Gastrocnemius medialis (tissue), 4 donors: ENCODE measurements at regions of chr5 and their contacts with region 1.

Region 1: GRCh38 chr5:139651853-139652787 is 4.0 kb downstream of the CXXC5 start:
- DNase-seq: peak; percentile 83 to 92
- ATAC-seq: peak; percentile 35 to 56
- H3K4me3 ChIP-seq: peak overlapping the region; percentile 27 to 77 (median 36)
- H3K27ac ChIP-seq: peak overlapping the region; percentile 97 to 99 (median 98)
- H3K4me1 ChIP-seq: peaks cover 69 to 70% of the 10 kb centered on the region in 2 donors
- H3K27me3 ChIP-seq: no peaks in the 10 kb centered on the region
- CTCF ChIP-seq: no peak
- POLR2A ChIP-seq: peak; percentile 53 to 87

Region 2: DNA sequence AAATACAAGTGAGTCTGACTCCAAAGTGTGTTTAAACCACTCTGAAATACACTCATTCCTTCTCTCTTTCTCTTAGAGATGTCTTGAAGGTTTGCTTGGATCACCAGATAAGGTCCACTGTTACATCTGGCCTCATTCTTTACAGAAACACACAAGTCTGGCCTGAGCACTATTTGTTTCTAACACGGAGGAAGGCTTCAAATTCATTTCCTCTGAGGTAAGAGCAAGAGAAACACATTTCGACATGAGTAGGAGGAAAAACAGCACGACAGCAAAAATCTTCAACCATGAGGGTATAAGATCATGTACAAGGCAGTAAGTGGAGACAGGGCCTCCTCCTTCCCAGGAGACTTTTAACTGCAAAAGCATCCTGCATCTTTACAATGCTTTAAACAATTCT is 462.0 kb before region 1 on chr5:
- in situ Hi-C with region 1: no loop called
- intact Hi-C with region 1: no loop called
- DNase-seq: no peak
- ATAC-seq: no peak
- H3K4me3 ChIP-seq: no peak overlapping the region
- H3K27ac ChIP-seq: peak overlapping the region in 3 of 4 donors; percentile 12 to 57 (median 12)
- H3K4me1 ChIP-seq: peaks cover 12 to 18% of the 10 kb centered on the region in 2 donors
- H3K27me3 ChIP-seq: no peaks in the 10 kb centered on the region
- CTCF ChIP-seq: no peak
- POLR2A ChIP-seq: no peak

Region 3: DNA sequence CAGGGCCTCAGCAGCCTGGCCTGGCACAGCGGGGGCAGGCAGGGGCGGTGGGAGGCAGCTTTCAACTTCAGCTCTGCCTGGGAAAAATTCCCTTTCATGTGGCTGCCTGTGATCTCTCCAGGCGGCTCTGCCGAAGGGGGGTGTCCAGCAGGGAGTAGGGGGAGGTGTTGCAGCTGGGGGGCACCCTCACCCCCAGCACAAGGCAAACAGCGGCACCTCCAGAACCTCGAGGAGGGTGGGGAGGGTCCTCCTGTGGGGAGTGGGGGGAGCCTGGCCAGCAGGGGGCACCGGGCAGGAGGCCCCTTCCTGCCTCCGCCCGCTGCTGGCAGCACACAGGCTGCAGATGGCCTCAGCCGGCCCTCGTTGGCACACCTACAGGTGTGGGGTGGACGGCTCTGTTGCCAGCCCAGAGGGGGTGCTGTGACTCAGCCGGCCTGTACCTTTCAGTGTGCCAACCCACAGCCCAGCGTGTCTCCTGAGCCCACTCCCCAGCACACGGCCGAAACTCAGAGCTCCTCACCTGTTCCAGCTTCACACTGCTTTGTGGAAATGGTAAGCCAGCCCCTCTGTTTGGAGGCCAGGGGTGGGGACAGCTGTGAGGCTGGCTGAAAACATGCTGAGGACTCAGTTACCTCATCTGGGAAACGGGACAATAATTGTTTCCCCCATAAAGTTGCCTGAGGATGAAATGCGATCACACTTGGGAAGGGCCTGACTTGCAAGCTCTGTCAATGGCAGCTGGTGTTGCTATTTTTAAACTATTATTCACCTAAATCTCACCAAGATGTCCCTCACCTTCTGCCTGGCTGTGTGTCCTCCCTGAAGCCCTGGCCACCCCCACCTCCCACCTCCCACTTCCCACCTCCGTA is 33.0 kb after region 1 on chr5:
- in situ Hi-C with region 1: no loop called
- intact Hi-C with region 1: loop called (anchors 1 kb)
- DNase-seq: peak; percentile 81 to 92
- ATAC-seq: peak; percentile 76 to 90
- H3K4me3 ChIP-seq: peak overlapping the region in 2 of 4 donors; percentile 9 to 16
- H3K27ac ChIP-seq: peak overlapping the region; percentile 97 to 99 (median 98)
- H3K4me1 ChIP-seq: peaks cover 57 to 66% of the 10 kb centered on the region in 2 donors
- H3K27me3 ChIP-seq: no peaks in the 10 kb centered on the region
- CTCF ChIP-seq: peak in 4 of 5 experiments; percentile 13 to 52 (median 36)
- POLR2A ChIP-seq: peak; percentile 45 to 78